ENCODE measurements at regions of chr1 and their contacts with region 1.

Region 1: GRCh38 chr1:62407405-62408009 is 29.3 kb upstream of the USP1 start:
- DNase-seq: peak; percentile 60
- CTCF ChIP-seq: peak; percentile 73

Region 2: GRCh38 chr1:62175568-62176179 is 231.8 kb before region 1 on chr1:
- in situ Hi-C with region 1: loop called (anchors 5 kb)
- DNase-seq: peak; percentile 47
- CTCF ChIP-seq: peak; percentile 71

Region 3: DNA sequence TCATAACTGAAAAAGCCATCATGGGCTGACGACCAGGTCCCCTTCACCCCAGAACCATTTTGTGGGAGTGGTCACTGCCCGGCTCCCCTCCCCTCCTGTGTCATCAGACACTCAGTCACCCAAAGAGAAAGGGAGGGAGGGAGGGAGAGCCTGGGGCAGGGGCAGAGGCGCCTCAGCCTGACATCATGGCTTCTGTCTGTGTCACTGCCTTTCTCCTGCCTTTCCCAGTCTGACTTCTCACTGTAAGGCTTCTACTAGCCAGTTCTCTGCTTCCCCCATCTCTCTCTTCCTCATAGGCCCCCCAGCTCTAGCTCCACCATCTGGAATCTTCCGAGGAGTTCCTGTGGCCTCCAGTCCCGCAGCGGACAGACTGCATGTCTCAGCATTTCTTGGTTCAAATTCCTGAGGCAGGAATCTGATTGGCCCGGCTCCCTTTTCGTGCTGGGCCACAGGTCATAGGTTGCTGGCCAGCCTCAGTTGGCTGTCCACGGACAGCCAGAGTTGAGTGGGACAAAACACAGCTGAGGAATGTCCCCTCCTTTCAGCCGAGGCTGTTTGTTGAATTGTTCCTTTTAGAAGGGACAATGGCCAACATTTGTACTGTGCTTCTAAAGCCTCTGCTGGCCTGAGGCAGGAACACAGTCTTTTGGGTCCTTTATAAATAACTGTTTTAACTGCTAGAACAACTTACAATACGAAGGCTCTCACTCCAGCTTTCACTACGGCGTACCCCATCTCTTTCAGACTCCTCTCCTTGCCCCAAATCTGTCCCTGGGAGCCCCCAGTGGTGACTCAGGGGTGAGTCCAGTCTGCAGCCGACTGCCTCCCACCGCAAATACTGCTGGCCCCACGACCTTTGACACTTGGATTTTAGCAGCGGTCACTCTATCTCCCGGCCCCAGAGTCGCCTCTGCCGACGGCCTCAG is 69.5 kb before region 1 on chr1:
- in situ Hi-C with region 1: no loop called
- DNase-seq: no peak
- CTCF ChIP-seq: no peak